ENCODE measurements at regions of chr3 and their contacts with region 1.

Region 1: DNA sequence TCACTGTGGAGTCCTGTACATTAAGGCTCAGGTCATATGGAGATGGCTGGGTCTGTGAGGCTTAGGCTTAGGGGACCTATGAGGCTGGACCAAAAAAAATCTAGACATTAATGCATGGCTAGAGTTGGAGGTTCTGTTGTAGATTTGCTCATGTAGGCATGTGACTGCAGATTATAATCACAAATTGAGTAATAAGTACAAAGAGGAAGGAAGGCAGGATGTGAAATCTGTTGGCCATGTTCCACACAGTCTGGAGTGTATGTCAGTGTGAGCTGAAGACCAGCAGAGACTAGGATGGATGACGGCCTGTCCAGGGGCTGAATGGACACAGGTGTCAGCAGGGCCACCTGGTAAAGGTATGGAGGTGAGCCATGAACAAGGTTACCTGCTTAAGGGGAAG is at the start of gene ST3GAL6:
- DNase-seq: peak in 1 of 2 donors; percentile 48
- ATAC-seq: peak; percentile 43 to 74 (median 62)
- H3K4me3 ChIP-seq: peak within 1 kb of the TSS in 6 of 10 donors; percentile 7 to 48 (median 24)
- H3K27ac ChIP-seq: peak within 1 kb of the TSS in 8 of 10 donors; percentile 25 to 85 (median 70)
- H3K4me1 ChIP-seq: peaks cover 8 to 99% (median 93%) of the 10 kb centered on the region in 9 donors
- H3K27me3 ChIP-seq: no peaks in the 10 kb centered on the region
- CTCF ChIP-seq: no peak
- total RNA-seq, gene ST3GAL6: 27.3 to 92.9 (median 62.6) TPM

Region 2: GRCh38 chr3:98692787-98693473 is 70.1 kb before region 1 on chr3:
- intact Hi-C with region 1: loop called in 1 of 10 experiments (anchors 5 kb)
- DNase-seq: no peak
- ATAC-seq: peak in 7 of 8 donors; percentile 61 to 91 (median 84)
- H3K4me3 ChIP-seq: no peak overlapping the region
- H3K27ac ChIP-seq: peak overlapping the region in 8 of 10 donors; percentile 0 to 80 (median 60)
- H3K4me1 ChIP-seq: peaks cover 0 to 16% (median 0%) of the 10 kb centered on the region in 9 donors
- H3K27me3 ChIP-seq: no peaks in the 10 kb centered on the region
- CTCF ChIP-seq: no peak

Region 3: DNA sequence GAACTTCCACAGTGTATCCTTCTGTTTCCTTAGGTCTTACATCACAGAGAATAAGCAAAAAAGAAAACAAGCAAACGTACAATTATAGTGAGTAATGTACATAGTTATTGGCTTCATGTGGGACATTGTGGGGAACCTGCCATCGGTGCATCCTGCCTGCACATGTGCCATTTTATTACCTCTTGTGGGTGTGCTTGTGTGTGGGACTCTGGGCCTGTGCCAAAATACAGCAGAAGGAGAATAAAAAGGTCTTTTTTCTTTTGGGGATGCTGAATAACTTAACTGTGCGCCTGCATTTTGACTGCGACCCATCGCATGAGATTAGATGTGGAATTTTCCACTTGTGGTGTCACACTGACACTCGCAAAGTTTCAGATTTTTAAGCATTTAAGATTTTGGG is 308.0 kb after region 1 on chr3:
- intact Hi-C with region 1: no loop called
- DNase-seq: no peak
- ATAC-seq: no peak
- H3K4me3 ChIP-seq: no peak overlapping the region
- H3K27ac ChIP-seq: no peak overlapping the region
- H3K4me1 ChIP-seq: no peaks in the 10 kb centered on the region
- H3K27me3 ChIP-seq: no peaks in the 10 kb centered on the region
- CTCF ChIP-seq: no peak